CD4-positive, alpha-beta memory T cell (primary cell): ENCODE measurements at regions of chr17 and their contacts with region 1.

Region 1: DNA sequence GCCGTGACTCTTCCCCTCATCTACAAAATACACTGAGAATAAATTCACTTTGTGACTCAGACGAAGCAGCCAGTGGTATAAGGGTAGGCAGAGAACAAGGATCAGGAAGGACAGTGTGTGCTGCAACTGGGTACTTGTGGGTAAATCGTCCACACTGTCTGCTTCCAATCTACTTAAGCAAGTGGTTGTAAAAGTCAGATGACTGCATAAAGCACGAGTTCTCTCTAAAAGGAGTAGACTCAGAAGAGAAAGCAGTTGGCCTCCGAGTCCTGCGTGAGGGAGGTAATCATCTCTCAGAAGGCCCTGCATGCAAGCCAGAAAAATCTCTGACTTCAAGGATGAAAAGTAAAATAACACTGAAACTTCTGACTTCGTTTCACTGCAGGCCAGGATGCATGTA is 43.1 kb downstream of the ANKFY1 start:
- DNase-seq: no peak
- H3K4me3 ChIP-seq: no peak overlapping the region
- H3K4me3 Mint-ChIP-seq: no peak overlapping the region
- H3K27ac ChIP-seq: no peak overlapping the region
- H3K27ac Mint-ChIP-seq: no peak overlapping the region
- H3K4me1 ChIP-seq: no peaks in the 10 kb centered on the region
- H3K4me1 Mint-ChIP-seq: peaks cover under 1 to 4% (median 1%) of the 10 kb centered on the region in 4 donors
- H3K27me3 ChIP-seq: no peaks in the 10 kb centered on the region
- H3K27me3 Mint-ChIP-seq: no peaks in the 10 kb centered on the region

Region 2: GRCh38 chr17:4199818-4200402 is 20.7 kb before region 1 on chr17:
- CTCF ChIA-PET with region 1: interaction called, 18 read pairs
- POLR2A ChIA-PET with region 1: no interaction called
- intact Hi-C with region 1: loop called (anchors 2 kb)
- DNase-seq: peak; percentile 39 to 43 (median 43)
- H3K4me3 ChIP-seq: no peak overlapping the region
- H3K4me3 Mint-ChIP-seq: no peak overlapping the region
- H3K27ac ChIP-seq: no peak overlapping the region
- H3K27ac Mint-ChIP-seq: no peak overlapping the region
- H3K4me1 ChIP-seq: no peaks in the 10 kb centered on the region
- H3K4me1 Mint-ChIP-seq: peaks cover 0 to 5% (median 2%) of the 10 kb centered on the region in 4 donors
- H3K27me3 ChIP-seq: no peaks in the 10 kb centered on the region
- H3K27me3 Mint-ChIP-seq: no peaks in the 10 kb centered on the region

Region 3: DNA sequence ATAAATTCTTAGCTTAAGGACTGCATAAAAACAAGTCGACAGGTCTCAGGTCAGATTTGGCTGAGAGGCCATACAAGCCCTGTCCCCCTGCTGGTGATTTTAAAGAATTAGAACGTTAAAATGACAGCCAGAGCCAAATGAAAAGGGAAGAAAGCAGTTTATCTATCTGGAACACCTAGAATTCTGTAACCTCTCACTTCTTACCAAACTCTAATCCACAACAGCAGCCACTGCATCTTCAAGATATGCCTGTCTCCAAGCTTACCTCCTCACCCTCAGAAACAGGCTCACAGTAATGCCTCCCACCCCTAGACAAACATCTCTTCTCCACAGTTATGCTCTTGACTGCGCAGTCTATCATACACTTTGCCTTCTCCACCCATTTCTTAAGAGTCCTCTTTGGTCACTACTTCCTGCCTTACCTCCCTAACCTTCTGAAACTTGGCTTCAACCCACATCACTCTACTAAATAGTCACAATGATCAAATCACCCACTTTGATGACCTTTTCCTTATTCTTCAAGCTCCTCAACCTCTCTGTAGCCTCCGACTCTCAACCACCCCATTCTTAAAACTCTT is 28.9 kb after region 1 on chr17:
- CTCF ChIA-PET with region 1: interaction called, 34 read pairs
- POLR2A ChIA-PET with region 1: no interaction called
- intact Hi-C with region 1: no loop called
- DNase-seq: peak in 2 of 5 donors; percentile 19 to 20
- H3K4me3 ChIP-seq: no peak overlapping the region
- H3K4me3 Mint-ChIP-seq: peak overlapping the region in 1 of 8 donors; percentile 2
- H3K27ac ChIP-seq: no peak overlapping the region
- H3K27ac Mint-ChIP-seq: peak overlapping the region in 6 of 7 donors; percentile 1 to 82 (median 28)
- H3K4me1 ChIP-seq: peaks cover 50% of the 10 kb centered on the region
- H3K4me1 Mint-ChIP-seq: peaks cover 34 to 73% (median 56%) of the 10 kb centered on the region in 4 donors
- H3K27me3 ChIP-seq: no peaks in the 10 kb centered on the region
- H3K27me3 Mint-ChIP-seq: no peaks in the 10 kb centered on the region

Region 4: GRCh38 chr17:4304417-4305027 is 83.9 kb after region 1 on chr17:
- CTCF ChIA-PET with region 1: interaction called, 22 read pairs
- POLR2A ChIA-PET with region 1: no interaction called
- intact Hi-C with region 1: loop called (anchors 1 kb)
- DNase-seq: peak; percentile 45 to 65 (median 54)
- H3K4me3 ChIP-seq: no peak overlapping the region
- H3K4me3 Mint-ChIP-seq: no peak overlapping the region
- H3K27ac ChIP-seq: no peak overlapping the region
- H3K27ac Mint-ChIP-seq: no peak overlapping the region
- H3K4me1 ChIP-seq: peaks cover 12% of the 10 kb centered on the region
- H3K4me1 Mint-ChIP-seq: peaks cover 15 to 29% (median 22%) of the 10 kb centered on the region in 4 donors
- H3K27me3 ChIP-seq: no peaks in the 10 kb centered on the region
- H3K27me3 Mint-ChIP-seq: no peaks in the 10 kb centered on the region

Region 5: GRCh38 chr17:4412933-4413831 is 192.5 kb after region 1 on chr17:
- CTCF ChIA-PET with region 1: interaction called, 215 read pairs
- POLR2A ChIA-PET with region 1: interaction called, 11 read pairs
- intact Hi-C with region 1: loop called (anchors 1 kb)
- DNase-seq: peak; percentile 79 to 88 (median 83)
- H3K4me3 ChIP-seq: peak overlapping the region in 1 of 2 donors; percentile 46
- H3K4me3 Mint-ChIP-seq: peak overlapping the region; percentile 52 to 79 (median 71)
- H3K27ac ChIP-seq: no peak overlapping the region
- H3K27ac Mint-ChIP-seq: peak overlapping the region in 4 of 7 donors; percentile 22 to 59 (median 57)
- H3K4me1 ChIP-seq: peaks cover 7% of the 10 kb centered on the region
- H3K4me1 Mint-ChIP-seq: peaks cover 4 to 6% (median 5%) of the 10 kb centered on the region in 4 donors
- H3K27me3 ChIP-seq: no peaks in the 10 kb centered on the region
- H3K27me3 Mint-ChIP-seq: no peaks in the 10 kb centered on the region